CD4-positive, alpha-beta memory T cell (primary cell): ENCODE measurements at regions of chr3 and their contacts with region 1.

Region 1: DNA sequence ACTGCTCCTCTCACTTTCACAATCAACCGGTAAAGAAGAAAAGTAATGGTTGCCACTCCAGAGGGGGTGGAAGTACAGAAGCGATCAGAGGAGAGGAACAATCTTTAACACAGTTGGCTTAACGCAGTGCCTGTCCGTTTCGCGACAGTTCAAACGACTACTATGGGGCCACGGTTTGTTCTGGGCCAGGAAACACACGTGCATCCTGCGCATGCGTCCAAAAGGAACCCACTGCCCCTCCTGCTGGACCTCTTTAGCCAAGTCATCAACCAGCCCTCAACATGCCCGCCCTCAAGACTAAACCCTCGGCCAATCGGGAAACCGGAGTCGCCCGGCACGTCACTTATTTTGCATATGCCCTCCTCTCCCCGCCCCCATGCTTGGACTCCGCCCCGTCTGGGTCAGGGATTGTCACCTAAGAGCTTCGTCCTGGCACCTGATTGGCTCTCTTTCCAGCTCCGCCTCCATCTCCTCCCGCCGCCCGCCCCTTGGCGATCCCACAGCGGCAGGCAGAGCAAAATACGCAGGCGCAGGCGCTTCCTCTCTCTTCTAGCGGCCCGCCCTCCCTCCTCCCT is 345 bp upstream of the CDV3 start:
- DNase-seq: peak; percentile 100
- H3K4me3 ChIP-seq: peak overlapping the region; percentile 27 to 59
- H3K4me3 Mint-ChIP-seq: peak overlapping the region; percentile 79 to 92 (median 87)
- H3K27ac ChIP-seq: peak overlapping the region; percentile 90
- H3K27ac Mint-ChIP-seq: peak overlapping the region; percentile 97 to 99 (median 98)
- H3K4me1 ChIP-seq: peaks cover 46% of the 10 kb centered on the region
- H3K4me1 Mint-ChIP-seq: peaks cover 37 to 58% (median 47%) of the 10 kb centered on the region in 4 donors
- H3K27me3 ChIP-seq: no peaks in the 10 kb centered on the region
- H3K27me3 Mint-ChIP-seq: no peaks in the 10 kb centered on the region

Region 2: DNA sequence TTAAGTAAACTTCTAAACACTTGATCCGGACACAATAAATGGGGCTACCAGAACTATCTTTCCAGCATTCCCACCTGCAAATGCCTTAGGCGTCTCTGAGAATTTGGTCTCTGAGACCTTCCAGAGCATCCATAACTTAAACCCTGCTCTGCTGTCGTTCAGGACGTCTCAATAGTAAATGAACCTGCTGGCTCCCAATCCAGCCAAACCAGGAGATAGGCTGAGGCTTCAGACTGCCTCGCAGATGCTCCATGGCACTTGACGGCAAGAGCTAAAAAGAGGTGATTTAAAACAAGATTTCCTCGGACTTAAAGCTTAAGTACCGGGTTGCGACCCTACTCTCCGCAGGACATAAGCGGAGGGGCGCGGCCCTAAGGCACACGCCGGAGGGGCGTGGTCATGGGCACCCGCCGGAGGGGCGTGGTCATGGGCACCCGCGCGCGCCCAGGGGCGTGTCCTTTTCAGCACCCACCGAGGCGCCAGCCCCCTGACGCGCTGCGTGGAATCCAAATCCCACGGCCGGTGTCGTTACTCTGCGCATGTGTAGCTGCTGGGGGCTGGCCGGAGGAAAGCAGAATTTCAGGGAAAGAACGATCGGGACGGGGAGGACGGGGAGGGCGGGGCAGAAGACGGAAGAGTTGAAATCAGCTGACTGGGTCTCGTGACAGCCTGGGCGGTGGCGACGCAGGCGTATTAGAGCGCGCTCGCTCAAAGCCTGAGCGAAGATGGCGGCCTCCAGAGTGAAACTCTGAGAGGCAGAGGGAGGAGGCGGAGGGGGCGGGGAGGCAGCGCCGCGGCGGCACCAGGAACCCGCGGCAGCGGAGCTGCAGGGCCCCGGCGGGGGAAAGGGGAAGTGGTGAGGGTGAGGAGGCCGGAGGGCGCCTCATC is 1156.1 kb before region 1 on chr3 and contains the start of gene DNAJC13:
- CTCF ChIA-PET with region 1: no interaction called
- POLR2A ChIA-PET with region 1: interaction called, 5 read pairs
- intact Hi-C with region 1: loop called (anchors 1 kb)
- DNase-seq: peak; percentile 91 to 95 (median 93)
- H3K4me3 ChIP-seq: peak within 1 kb of the TSS; percentile 84 to 89
- H3K4me3 Mint-ChIP-seq: peak within 1 kb of the TSS; percentile 96 to 100 (median 99)
- H3K27ac ChIP-seq: peak within 1 kb of the TSS; percentile 82
- H3K27ac Mint-ChIP-seq: peak within 1 kb of the TSS; percentile 95 to 99 (median 98)
- H3K4me1 ChIP-seq: peaks cover 23% of the 10 kb centered on the region
- H3K4me1 Mint-ChIP-seq: peaks cover 20 to 38% (median 26%) of the 10 kb centered on the region in 4 donors
- H3K27me3 ChIP-seq: no peaks in the 10 kb centered on the region
- H3K27me3 Mint-ChIP-seq: no peaks in the 10 kb centered on the region
- total RNA-seq, gene DNAJC13: 43.1 to 43.5 TPM

Region 3: DNA sequence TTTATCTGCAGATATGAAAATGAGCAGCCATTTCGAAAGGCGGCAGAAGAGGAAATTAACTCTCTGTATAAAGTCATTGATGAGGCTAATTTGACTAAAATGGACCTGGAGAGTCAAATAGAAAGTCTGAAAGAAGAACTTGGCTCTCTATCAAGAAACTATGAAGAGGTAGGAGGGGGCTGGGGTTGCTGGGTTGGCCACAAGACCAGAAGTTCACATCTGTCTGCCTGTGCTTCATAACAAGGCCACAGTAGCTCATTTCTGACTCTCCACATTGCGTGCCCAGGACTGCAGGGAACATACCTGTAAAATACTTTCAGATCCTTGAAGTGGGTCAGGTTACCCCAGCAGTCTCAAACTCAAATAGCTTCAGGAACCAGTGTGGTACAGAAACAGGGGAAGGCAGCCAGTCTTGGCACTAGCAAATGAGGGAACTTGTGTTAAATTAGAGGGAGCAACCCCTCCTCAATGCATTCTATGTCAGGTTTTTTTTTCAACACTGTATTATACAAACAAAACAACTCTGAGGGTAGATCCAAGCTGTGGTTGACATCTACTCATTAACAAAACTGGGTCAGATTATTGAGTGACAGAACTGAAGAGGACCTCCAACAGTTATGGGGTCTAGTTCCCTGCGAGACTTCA is 124.5 kb before region 1 on chr3:
- CTCF ChIA-PET with region 1: interaction called, 5 read pairs
- POLR2A ChIA-PET with region 1: interaction called, 13 read pairs
- intact Hi-C with region 1: loop called (anchors 5 kb)
- DNase-seq: peak; percentile 22 to 56 (median 32)
- H3K4me3 ChIP-seq: no peak overlapping the region
- H3K4me3 Mint-ChIP-seq: peak overlapping the region in 7 of 8 donors; percentile 13 to 81 (median 60)
- H3K27ac ChIP-seq: no peak overlapping the region
- H3K27ac Mint-ChIP-seq: peak overlapping the region; percentile 57 to 96 (median 89)
- H3K4me1 ChIP-seq: peaks cover 21% of the 10 kb centered on the region
- H3K4me1 Mint-ChIP-seq: peaks cover 19 to 38% (median 27%) of the 10 kb centered on the region in 4 donors
- H3K27me3 ChIP-seq: no peaks in the 10 kb centered on the region
- H3K27me3 Mint-ChIP-seq: no peaks in the 10 kb centered on the region

Region 4: GRCh38 chr3:133506215-133506901 is 66.8 kb before region 1 on chr3:
- CTCF ChIA-PET with region 1: interaction called, 14 read pairs
- POLR2A ChIA-PET with region 1: interaction called, 43 read pairs
- intact Hi-C with region 1: loop called (anchors 1 kb)
- DNase-seq: peak in 4 of 5 donors; percentile 42 to 60 (median 52)
- H3K4me3 ChIP-seq: peak overlapping the region in 1 of 2 donors; percentile 34
- H3K4me3 Mint-ChIP-seq: peak overlapping the region; percentile 64 to 92 (median 86)
- H3K27ac ChIP-seq: peak overlapping the region; percentile 59
- H3K27ac Mint-ChIP-seq: peak overlapping the region; percentile 81 to 98 (median 94)
- H3K4me1 ChIP-seq: peaks cover 16% of the 10 kb centered on the region
- H3K4me1 Mint-ChIP-seq: peaks cover 12 to 15% (median 13%) of the 10 kb centered on the region in 4 donors
- H3K27me3 ChIP-seq: no peaks in the 10 kb centered on the region
- H3K27me3 Mint-ChIP-seq: no peaks in the 10 kb centered on the region

Region 5: GRCh38 chr3:133805527-133806475 is 232.7 kb after region 1 on chr3 and contains the start of gene SRPRB:
- CTCF ChIA-PET with region 1: no interaction called
- POLR2A ChIA-PET with region 1: interaction called, 3 read pairs
- intact Hi-C with region 1: loop called (anchors 1 kb)
- DNase-seq: peak; percentile 93 to 98 (median 96)
- H3K4me3 ChIP-seq: peak within 1 kb of the TSS; percentile 57 to 85
- H3K4me3 Mint-ChIP-seq: peak within 1 kb of the TSS; percentile 94 to 98 (median 98)
- H3K27ac ChIP-seq: peak within 1 kb of the TSS; percentile 65
- H3K27ac Mint-ChIP-seq: peak within 1 kb of the TSS; percentile 92 to 98 (median 95)
- H3K4me1 ChIP-seq: peaks cover 29% of the 10 kb centered on the region
- H3K4me1 Mint-ChIP-seq: peaks cover 20 to 46% (median 29%) of the 10 kb centered on the region in 4 donors
- H3K27me3 ChIP-seq: no peaks in the 10 kb centered on the region
- H3K27me3 Mint-ChIP-seq: peaks cover 0 to 5% of the 10 kb centered on the region in 2 donors
- total RNA-seq, gene SRPRB: 45.6 to 49.8 TPM